ENCODE measurements at regions of chr3 and their contacts with region 1.

Region 1: GRCh38 chr3:14921078-14921616 is 26.2 kb upstream of the NR2C2 start:
- DNase-seq: peak; percentile 73 to 93 (median 86)

Region 2: DNA sequence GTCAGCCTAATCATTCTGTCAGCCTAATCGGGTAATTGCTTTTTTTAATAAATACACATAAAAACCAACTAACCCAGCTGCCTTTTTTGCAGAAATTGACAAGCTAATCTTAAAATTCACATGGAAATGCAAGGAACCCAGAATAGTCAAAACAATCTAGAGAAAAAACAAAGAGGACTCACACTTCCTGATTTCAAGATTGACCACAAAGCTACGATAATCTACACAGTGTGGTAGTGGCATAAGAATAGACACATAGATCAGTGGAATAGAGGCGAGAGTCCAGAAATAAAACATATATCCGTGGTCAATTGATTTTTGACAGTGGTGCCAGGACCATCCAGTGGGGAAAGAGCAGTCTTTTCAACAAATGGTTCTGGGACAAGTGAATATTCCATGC is 248.6 kb before region 1 on chr3:
- intact Hi-C with region 1: loop called (anchors 5 kb)
- DNase-seq: no peak